Aorta (tissue), 5 donors: ENCODE measurements at regions of chr10 and their contacts with region 1.

Region 1: GRCh38 chr10:373522-374309 is 238.5 kb downstream of the ZMYND11 start:
- DNase-seq: peak; percentile 63 to 72
- ATAC-seq: no peak
- H3K4me3 ChIP-seq: no peak overlapping the region
- H3K27ac ChIP-seq: peak overlapping the region; percentile 63 to 77
- H3K4me1 ChIP-seq: peaks cover 0 to 3% of the 10 kb centered on the region in 2 donors
- H3K27me3 ChIP-seq: no peaks in the 10 kb centered on the region

Region 2: DNA sequence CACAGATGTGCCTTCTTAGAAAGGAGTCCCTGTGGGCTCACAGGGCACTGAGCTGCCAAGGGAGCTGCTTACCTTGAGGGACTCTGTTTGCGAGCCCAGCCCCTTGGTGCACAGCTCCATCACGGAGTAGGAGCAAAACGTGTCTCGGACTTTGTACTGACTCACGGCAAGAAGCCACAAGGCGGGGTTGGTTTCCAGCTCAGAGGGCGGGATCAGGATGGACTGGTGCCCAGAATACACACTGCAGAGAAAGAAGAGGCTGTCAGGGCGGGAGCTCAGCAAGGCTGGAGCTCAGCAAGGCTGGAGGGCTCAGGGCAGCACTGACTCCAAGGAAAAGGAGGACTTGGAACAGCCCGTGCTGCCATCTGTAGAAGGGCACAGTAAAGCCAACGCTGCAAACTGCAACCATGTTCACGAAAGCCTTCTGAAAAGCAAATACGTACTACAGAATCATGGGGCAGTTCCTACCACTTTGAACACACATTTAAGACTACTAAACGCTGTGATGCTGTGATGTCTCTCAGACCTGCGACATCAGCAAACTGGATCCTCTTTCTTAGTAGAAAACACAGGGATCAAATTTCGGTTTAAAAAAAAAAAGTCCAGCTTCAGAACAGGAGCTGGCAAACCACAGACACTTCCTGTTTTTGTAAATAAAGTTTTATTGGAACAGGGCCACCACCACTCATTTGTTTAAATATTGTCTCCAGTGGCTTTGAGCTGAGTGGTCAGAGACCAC is 44.2 kb before region 1 on chr10:
- intact Hi-C with region 1: loop called in 1 of 2 experiments (anchors 5 kb)
- DNase-seq: peak; percentile 91 to 95
- ATAC-seq: peak; percentile 87
- H3K4me3 ChIP-seq: no peak overlapping the region
- H3K27ac ChIP-seq: peak overlapping the region in 1 of 2 donors; percentile 26
- H3K4me1 ChIP-seq: no peaks in the 10 kb centered on the region
- H3K27me3 ChIP-seq: no peaks in the 10 kb centered on the region

Region 3: GRCh38 chr10:416091-416515 is 42.4 kb after region 1 on chr10:
- intact Hi-C with region 1: no loop called
- DNase-seq: no peak
- ATAC-seq: no peak
- H3K4me3 ChIP-seq: no peak overlapping the region
- H3K27ac ChIP-seq: no peak overlapping the region
- H3K4me1 ChIP-seq: no peaks in the 10 kb centered on the region
- H3K27me3 ChIP-seq: no peaks in the 10 kb centered on the region